K562 (cell line): ENCODE measurements at regions of chr9 and their contacts with region 1.

Region 1: DNA sequence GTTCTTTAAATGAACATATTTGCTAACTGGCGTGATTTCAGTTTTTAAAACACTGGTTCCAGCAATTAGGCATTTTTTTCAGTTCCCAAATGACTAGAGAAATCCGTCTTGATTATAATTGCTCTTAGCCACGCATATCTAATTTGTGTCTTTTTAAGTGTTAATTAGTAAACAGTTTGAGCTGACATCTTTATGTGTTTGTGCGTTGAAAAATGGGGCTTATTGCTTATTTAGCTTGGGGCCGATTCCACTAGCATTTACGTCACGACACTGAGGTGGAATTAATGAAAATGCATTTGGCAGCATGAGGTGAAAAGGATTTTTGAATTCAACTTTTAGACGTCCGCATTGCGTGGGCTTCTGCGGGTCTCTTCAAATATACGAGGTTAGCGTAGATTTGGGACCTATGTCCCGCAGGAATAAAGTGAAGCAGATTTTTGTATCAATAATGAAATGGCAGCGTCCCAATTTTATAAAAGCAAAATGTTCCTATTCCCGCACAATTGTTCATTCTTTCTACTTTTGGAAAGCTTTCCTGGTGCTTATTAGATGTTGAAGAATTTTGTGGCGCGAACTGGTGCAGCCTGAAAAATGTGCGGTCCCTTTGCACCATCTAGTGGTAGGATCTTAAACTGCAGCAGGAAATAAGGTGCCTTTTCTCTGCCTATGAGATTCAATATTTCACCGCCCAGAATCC is 122.7 kb upstream of the LMX1B start:
- DNase-seq: peak; percentile 58 to 71 (median 66)
- ATAC-seq: peak; percentile 82
- H3K4me3 ChIP-seq: no peak overlapping the region
- H3K27ac ChIP-seq: no peak overlapping the region
- H3K4me1 ChIP-seq: no peaks in the 10 kb centered on the region
- H3K27me3 ChIP-seq: peaks cover 10 to 56% of the 10 kb centered on the region in 2 experiments
- CTCF ChIP-seq: peak; percentile 68 to 95 (median 82)
- EP300 ChIP-seq: no peak
- POLR2A ChIP-seq: no peak
- RAD21 ChIP-seq: peak; percentile 85

Region 2: GRCh38 chr9:125261501-125262293 is 1229.3 kb before region 1 on chr9 and contains the start of gene GAPVD1:
- CTCF ChIA-PET with region 1: no interaction called
- POLR2A ChIA-PET with region 1: no interaction called
- in situ Hi-C with region 1: loop called (anchors 25 kb)
- intact Hi-C with region 1: no loop called
- DNase-seq: peak; percentile 97 to 99 (median 98)
- ATAC-seq: peak; percentile 96
- H3K4me3 ChIP-seq: peak within 1 kb of the TSS; percentile 97
- H3K27ac ChIP-seq: peak within 1 kb of the TSS; percentile 99
- H3K4me1 ChIP-seq: peaks cover 18 to 22% of the 10 kb centered on the region in 2 experiments; a peak in 4 of 5 replicates
- H3K27me3 ChIP-seq: no peaks in the 10 kb centered on the region
- CTCF ChIP-seq: peak; percentile 62 to 73 (median 62); a peak in 5 of 6 replicates
- EP300 ChIP-seq: 0 out of 2 replicates have a peak, but pooled peaks have one; percentile 16
- POLR2A ChIP-seq: peak; percentile 90
- RAD21 ChIP-seq: no peak
- polyA plus RNA-seq, gene GAPVD1: 9.5 to 12.0 TPM

Region 3: DNA sequence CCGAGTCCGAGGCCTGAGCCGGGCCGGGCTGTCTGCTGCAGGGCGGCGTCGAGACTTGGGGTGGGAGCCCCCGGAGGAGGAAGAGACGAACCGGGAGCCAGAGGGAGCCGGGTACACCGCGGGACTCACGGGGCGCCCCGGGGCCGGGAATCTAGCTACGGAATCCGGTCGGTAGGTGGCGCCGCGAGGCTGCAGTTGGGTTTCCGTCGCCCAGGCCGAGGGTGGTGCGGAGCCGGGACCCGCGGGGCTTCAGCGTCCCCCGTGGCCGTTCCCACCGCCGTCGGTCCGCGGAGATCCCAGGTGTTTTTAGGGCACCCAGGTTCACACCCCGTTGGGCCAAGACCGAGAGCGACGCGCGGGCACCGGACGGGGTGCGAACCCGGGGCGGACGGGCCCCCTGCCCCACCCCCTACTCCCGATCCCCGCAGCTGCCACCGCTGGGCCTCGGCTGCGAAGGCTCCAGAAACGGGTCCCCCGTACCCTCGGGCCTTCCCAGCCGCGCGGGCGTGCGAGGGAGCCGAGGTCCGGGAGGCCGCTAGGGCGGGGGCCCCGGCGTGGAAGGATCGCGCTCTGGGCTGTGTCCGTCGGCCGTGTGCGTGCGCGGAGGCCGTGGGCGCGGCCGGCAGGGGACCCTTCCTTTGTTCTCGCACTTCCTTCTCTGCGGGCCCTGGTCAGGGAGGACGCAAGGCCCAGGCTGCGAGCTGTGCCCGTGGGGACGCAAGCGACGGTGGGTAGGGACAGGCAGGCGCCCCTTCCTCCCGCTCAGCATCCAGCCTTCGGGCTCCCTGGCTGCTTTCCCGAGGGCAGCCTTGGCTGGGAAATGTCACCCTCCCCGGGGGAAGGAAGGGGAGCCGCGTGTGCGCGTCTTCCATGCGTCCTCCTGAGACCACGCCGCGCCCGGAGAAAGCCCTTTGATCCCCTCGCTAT is 1082.8 kb before region 1 on chr9:
- CTCF ChIA-PET with region 1: no interaction called
- POLR2A ChIA-PET with region 1: interaction called, 3 read pairs
- in situ Hi-C with region 1: no loop called
- intact Hi-C with region 1: loop called (anchors 5 kb)
- DNase-seq: peak; percentile 88 to 92 (median 89)
- ATAC-seq: peak; percentile 87
- H3K4me3 ChIP-seq: peak overlapping the region; percentile 52
- H3K27ac ChIP-seq: peak overlapping the region; percentile 25; the same call in 1 of the 3 replicates
- H3K4me1 ChIP-seq: peaks cover 9 to 56% of the 10 kb centered on the region in 2 experiments; a peak in 4 of 5 replicates
- H3K27me3 ChIP-seq: no peaks in the 10 kb centered on the region; a peak in 1 of 5 replicates
- CTCF ChIP-seq: peak; percentile 87 to 97 (median 93)
- EP300 ChIP-seq: no peak
- POLR2A ChIP-seq: no peak
- RAD21 ChIP-seq: peak; percentile 84 to 91

Region 4: DNA sequence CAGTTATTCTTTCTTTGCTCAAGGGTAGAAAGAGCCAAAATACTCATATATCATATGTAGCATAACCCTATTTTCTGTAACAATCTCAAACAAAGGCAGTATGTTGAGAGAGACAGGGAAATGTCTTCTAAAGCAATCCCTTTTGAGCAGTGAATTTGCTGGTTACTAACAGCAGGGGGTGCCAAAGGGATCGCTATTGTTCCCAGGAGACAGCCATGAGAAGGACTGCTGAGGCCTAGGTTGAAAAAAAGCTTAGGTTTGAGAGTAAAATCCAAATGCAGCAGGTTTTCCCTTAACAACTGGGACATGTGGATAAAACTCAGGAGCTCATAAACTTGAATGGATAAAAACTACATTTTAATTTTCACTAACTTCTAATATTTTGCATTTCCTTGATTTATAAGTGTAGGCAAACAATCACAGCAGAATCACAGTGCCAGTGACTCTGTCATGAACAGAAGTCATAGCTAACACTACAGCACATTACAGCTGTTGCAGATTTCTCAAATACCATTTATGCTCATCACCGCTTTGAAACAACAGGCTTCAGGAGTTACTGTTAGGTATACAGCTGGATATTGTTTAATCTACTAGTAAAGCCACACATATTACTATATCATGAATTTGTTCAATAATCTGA is 932.4 kb before region 1 on chr9:
- CTCF ChIA-PET with region 1: no interaction called
- POLR2A ChIA-PET with region 1: no interaction called
- in situ Hi-C with region 1: no loop called
- intact Hi-C with region 1: loop called (anchors 10 kb)
- DNase-seq: peak; percentile 68 to 72 (median 71)
- ATAC-seq: peak; percentile 87
- H3K4me3 ChIP-seq: no peak overlapping the region
- H3K27ac ChIP-seq: no peak overlapping the region
- H3K4me1 ChIP-seq: no peaks in the 10 kb centered on the region; a peak in 1 of 5 replicates
- H3K27me3 ChIP-seq: no peaks in the 10 kb centered on the region
- CTCF ChIP-seq: peak; percentile 64 to 79 (median 72)
- EP300 ChIP-seq: no peak
- POLR2A ChIP-seq: no peak
- RAD21 ChIP-seq: peak; percentile 65 to 81

Region 5: GRCh38 chr9:126301985-126302603 is 188.9 kb before region 1 on chr9:
- CTCF ChIA-PET with region 1: no interaction called
- POLR2A ChIA-PET with region 1: no interaction called
- in situ Hi-C with region 1: no loop called
- intact Hi-C with region 1: loop called (anchors 1 kb)
- DNase-seq: peak; percentile 33 to 61 (median 51)
- ATAC-seq: peak; percentile 81
- H3K4me3 ChIP-seq: no peak overlapping the region
- H3K27ac ChIP-seq: no peak overlapping the region
- H3K4me1 ChIP-seq: no peaks in the 10 kb centered on the region
- H3K27me3 ChIP-seq: peaks cover 2 to 40% of the 10 kb centered on the region in 2 experiments; a peak in 4 of 5 replicates
- CTCF ChIP-seq: peak; percentile 58 to 63 (median 59); a peak in 5 of 6 replicates
- EP300 ChIP-seq: no peak
- POLR2A ChIP-seq: no peak
- RAD21 ChIP-seq: peak; percentile 46 to 51; a peak in 3 of 4 replicates

Region 6: DNA sequence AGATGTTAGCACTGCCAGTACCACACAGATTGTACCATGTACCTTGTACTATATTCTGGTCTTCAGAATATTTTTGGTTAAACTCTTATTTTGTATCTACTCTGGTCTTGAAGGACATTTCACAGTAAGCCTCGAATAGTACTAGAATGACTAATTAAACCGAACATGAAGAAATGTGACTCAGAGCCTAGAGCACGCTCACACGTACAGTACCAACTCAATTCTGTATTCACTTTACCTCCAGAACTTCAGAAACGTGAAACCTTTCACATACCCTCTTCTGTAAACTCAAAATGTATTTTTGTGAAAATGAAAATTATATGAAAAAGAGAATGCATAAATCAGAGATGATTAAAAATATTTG is 51.6 kb before region 1 on chr9:
- CTCF ChIA-PET with region 1: no interaction called
- POLR2A ChIA-PET with region 1: no interaction called
- in situ Hi-C with region 1: no loop called
- intact Hi-C with region 1: loop called (anchors 10 kb)
- DNase-seq: no peak
- ATAC-seq: no peak
- H3K4me3 ChIP-seq: no peak overlapping the region
- H3K27ac ChIP-seq: no peak overlapping the region
- H3K4me1 ChIP-seq: no peaks in the 10 kb centered on the region
- H3K27me3 ChIP-seq: peaks cover 12 to 30% of the 10 kb centered on the region in 2 experiments; a peak in 3 of 5 replicates
- CTCF ChIP-seq: no peak
- EP300 ChIP-seq: no peak
- POLR2A ChIP-seq: no peak
- RAD21 ChIP-seq: no peak